Prostate gland (tissue), 2 donors: ENCODE measurements at regions of chr13 and their contacts with region 1.

Region 1: DNA sequence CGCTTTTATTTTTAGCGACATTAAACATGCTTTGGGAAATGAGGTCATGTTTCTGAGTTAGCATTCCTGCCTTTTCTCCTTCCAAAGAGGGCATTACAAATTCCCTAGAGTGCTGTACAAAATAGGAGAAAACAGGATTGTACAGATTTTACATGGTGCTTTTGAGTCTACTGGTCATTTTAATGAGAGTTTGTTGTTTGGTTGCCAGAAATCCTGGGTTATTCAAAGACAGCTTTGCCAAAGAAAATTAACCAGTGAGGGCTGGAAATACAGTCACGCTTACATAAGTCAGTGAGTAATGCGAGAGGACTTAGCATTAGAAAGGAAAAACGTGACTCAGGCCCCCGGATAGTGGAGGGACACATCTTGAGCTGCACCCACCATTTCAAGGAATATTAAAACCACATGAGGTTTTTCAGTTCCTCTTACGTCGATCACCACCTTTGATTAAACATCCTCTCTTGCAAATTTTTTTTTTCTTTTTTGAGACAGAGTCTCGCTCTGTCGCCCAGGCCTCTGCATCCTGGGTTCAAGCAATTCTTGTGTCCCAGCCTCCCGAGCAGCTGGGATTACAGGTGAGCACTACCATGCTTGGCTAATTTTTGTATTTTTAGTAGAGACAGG is 55.4 kb downstream of the SACS start:
- DNase-seq: no peak
- H3K4me3 ChIP-seq: no peak overlapping the region
- H3K27ac ChIP-seq: peak overlapping the region; percentile 20 to 50
- H3K4me1 ChIP-seq: no peaks in the 10 kb centered on the region
- H3K27me3 ChIP-seq: no peaks in the 10 kb centered on the region
- CTCF ChIP-seq: no peak
- POLR2A ChIP-seq: no peak

Region 2: DNA sequence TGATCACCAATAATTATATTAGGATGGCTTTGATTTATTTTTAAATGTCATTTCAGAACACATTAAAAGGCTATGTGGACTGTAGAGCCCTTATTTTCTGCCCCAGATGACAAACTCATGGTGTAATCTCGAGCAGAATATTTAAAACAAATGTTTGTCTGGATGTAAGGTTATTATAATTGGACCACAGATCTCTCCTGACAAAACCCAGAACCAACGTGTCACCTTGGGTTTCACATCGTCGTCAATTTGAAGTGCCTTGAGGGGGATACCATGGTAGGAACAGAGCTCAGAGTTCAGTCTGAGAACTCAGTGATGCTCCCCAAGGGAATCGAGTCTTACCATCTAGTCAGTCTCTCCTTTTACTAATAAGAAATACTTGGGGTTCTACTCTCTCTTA is 52.5 kb after region 1 on chr13:
- intact Hi-C with region 1: loop called (anchors 2 kb)
- DNase-seq: no peak
- H3K4me3 ChIP-seq: no peak overlapping the region
- H3K27ac ChIP-seq: no peak overlapping the region
- H3K4me1 ChIP-seq: no peaks in the 10 kb centered on the region
- H3K27me3 ChIP-seq: no peaks in the 10 kb centered on the region
- CTCF ChIP-seq: no peak
- POLR2A ChIP-seq: no peak